ENCODE measurements at regions of chr6 and their contacts with region 1.

Region 1: GRCh38 chr6:39887381-39888070 is 46.7 kb downstream of the MOCS1 start:
- DNase-seq: peak; percentile 67 to 96
- H3K4me3 ChIP-seq: peak overlapping the region in 1 of 2 donors; percentile 3
- H3K27ac ChIP-seq: peak overlapping the region; percentile 90 to 95
- H3K4me1 ChIP-seq: peaks cover 25 to 64% of the 10 kb centered on the region in 2 donors
- H3K27me3 ChIP-seq: no peaks in the 10 kb centered on the region
- CTCF ChIP-seq: no peak

Region 2: GRCh38 chr6:39347906-39348585 is 539.5 kb before region 1 on chr6:
- intact Hi-C with region 1: loop called (anchors 10 kb)
- DNase-seq: peak in 1 of 2 donors; percentile 84
- H3K4me3 ChIP-seq: no peak overlapping the region
- H3K27ac ChIP-seq: no peak overlapping the region
- H3K4me1 ChIP-seq: peaks cover 4 to 21% of the 10 kb centered on the region in 2 donors
- H3K27me3 ChIP-seq: no peaks in the 10 kb centered on the region
- CTCF ChIP-seq: peak; percentile 62 to 95 (median 89)

Region 3: DNA sequence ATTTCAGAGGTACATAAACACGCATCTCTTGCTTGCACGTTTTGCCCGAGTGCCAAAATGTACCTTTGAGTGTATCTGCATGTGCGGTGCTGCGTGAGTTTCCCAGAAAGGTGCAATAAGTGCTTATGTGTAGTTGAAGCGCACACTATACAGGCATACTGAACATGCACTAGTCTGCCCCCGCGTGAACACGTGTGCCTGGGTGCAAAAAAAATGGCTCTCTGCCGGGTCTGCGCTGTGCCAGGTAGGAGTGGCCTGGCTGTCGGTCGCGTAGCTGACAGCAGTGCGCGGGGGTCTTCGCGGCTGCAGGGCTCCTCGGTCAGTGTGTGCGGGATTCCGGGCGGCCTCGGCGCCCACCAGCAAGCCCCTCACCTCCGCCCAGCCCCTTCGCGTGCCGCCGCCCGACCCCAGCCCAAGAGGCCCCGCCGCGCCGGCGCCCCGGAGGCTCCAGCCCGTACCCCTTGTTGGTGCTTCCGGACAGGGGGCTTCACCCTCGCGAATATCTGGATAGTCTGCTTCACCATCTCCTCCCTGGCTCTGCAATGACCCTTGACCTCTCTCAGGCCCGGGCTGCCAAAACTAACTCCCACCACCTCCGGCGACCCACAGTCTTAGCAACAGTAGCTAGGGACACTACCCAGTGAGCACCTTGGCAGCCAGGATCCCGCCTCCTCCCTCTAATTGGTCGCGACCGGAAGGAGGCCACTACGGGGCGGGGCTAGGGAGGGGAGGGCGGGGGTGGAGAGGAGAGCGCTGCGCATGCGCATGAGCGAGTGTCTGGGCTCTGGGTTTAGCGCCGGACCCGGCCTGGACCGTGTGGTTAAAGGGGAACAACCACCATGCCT is 162.5 kb before region 1 on chr6 and contains the start of gene KIF6:
- intact Hi-C with region 1: loop called (anchors 5 kb)
- DNase-seq: peak; percentile 64 to 95
- H3K4me3 ChIP-seq: peak within 1 kb of the TSS; percentile 56 to 95
- H3K27ac ChIP-seq: peak within 1 kb of the TSS in 1 of 2 donors; percentile 27
- H3K4me1 ChIP-seq: peaks cover 0 to 4% of the 10 kb centered on the region in 2 donors
- H3K27me3 ChIP-seq: no peaks in the 10 kb centered on the region
- CTCF ChIP-seq: no peak
- total RNA-seq, gene KIF6: 0.43 TPM

Region 4: DNA sequence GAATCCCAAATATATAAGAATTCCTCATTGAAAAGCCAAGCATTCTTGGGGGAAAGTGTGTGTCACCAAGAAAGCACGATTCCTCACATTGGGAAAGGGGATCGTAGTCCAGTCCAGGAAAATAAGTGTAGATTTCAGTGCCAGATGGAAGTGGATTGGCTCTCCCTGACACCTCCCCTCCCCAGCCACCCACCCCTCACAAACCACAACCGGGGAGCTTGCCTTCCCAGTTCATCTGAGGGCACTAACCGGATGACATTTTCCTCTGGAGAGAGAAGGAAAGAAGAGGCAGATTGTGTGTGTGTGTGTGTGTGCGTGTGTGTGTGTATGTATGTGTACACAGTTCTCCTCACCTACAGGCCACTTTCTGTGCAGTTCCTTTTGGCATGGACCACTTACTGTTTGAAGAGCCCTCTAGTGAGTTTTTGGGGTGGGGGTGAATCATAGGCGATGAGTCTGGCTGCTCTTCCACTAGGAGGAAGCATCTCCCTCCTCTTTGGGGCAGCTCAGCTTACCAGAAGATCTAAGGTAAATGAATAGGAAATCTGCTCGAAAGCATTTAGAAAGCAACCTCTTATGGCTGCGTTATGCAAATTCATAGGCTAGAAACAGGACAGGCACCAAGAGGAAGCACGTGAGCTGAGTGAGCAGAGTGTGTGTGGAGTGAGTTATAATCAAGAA is 74.5 kb before region 1 on chr6:
- intact Hi-C with region 1: loop called (anchors 10 kb)
- DNase-seq: peak in 1 of 2 donors; percentile 72
- H3K4me3 ChIP-seq: peak overlapping the region in 1 of 2 donors; percentile 13
- H3K27ac ChIP-seq: peak overlapping the region; percentile 62 to 72
- H3K4me1 ChIP-seq: peaks cover 25 to 72% of the 10 kb centered on the region in 2 donors
- H3K27me3 ChIP-seq: no peaks in the 10 kb centered on the region
- CTCF ChIP-seq: peak in 1 of 3 experiments; percentile 33

Region 5: GRCh38 chr6:39850736-39851297 is 36.7 kb before region 1 on chr6:
- intact Hi-C with region 1: loop called (anchors 5 kb)
- DNase-seq: no peak
- H3K4me3 ChIP-seq: no peak overlapping the region
- H3K27ac ChIP-seq: peak overlapping the region; percentile 61 to 68
- H3K4me1 ChIP-seq: peaks cover 19 to 60% of the 10 kb centered on the region in 2 donors
- H3K27me3 ChIP-seq: no peaks in the 10 kb centered on the region
- CTCF ChIP-seq: no peak

Region 6: DNA sequence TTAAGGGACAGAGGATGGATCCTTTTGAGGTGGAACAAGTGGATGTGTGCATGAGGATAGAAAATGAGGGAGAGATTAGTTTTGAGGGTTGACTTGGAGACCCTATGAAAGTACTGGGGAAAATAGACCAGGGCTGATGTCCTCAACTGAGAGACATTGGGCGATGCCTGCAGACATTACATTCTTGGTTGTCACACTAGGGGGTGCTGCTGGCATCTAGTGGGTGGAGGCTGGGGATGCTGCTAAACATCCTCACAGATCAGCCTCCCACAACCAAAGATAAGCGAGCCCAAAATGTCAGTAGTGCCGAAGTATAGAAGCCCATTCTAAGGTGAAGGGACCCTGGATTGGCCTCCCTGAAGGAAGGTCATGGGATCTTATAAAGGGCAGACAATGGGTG is 16.6 kb before region 1 on chr6:
- intact Hi-C with region 1: no loop called
- DNase-seq: no peak
- H3K4me3 ChIP-seq: no peak overlapping the region
- H3K27ac ChIP-seq: no peak overlapping the region
- H3K4me1 ChIP-seq: no peaks in the 10 kb centered on the region
- H3K27me3 ChIP-seq: no peaks in the 10 kb centered on the region
- CTCF ChIP-seq: no peak